ENCODE measurements at regions of chr16 and their contacts with region 1.

Region 1: DNA sequence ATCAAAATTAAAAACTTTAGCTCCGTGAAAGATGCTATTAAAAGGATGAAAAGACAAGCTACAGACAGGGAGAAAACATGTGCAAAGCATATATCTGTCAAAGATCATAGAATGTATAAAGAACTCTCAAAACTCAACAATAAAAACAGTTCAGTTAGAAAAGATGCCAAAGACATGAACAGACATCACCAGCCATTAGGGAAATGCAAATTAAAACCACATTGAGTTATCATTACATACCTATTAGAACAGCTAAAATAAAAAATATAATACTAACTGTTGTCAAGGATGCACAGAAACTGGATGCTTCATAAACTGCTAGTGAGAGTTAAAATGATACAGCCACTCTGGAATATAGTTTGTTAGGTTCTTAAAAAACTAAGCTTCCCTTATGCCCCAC is 58.8 kb downstream of the NFATC3 start:
- DNase-seq: no peak
- H3K4me3 Mint-ChIP-seq: no peak overlapping the region
- H3K27ac Mint-ChIP-seq: no peak overlapping the region
- H3K4me1 Mint-ChIP-seq: peaks cover 54% of the 10 kb centered on the region
- H3K27me3 Mint-ChIP-seq: no peaks in the 10 kb centered on the region

Region 2: DNA sequence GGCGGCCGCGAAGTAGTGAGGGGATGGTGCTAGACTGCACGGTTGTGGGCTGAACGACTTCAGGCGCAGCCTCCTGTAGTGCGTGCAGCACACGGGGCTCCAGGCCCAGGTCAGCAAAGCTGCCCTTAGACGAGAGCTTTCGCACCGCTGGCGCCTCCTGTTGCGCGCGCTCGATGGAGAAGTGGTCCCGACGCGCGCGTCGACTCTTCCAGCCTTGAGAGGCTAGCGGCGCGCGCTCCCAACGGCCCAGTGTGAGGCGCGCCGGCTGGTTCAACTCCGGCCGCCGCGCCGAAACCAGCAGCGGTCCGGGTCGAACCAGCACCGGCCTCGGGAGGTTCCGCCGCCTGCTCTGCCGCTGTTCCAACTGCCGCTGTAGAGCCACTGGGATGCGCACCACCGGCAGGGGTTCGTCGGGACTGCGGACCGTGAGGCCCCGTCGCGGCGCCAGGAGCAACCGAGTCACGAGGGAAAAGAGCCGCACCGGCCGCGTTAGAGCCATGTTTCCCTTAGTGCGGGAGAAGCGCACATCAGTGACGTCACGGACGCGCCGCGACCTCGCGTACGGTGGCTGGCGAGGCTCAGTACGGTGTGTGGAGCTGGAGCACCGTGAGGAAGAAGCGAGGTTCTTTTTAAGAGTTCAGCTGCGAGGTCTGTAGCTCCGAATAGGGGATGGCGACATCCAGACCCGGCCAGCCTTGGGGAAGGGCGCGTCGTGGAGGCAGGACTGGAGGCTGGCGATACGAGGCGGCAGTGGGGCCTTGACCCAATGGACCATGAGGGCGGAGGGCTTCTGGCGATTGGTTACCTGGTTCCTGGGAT is 121.1 kb before region 1 on chr16 and contains the starts of genes DDX28 and DUS2:
- CTCF ChIA-PET with region 1: no interaction called
- POLR2A ChIA-PET with region 1: no interaction called
- intact Hi-C with region 1: no loop called
- DNase-seq: peak; percentile 97
- H3K4me3 Mint-ChIP-seq: peak within 1 kb of the TSS; percentile 95
- H3K27ac Mint-ChIP-seq: peak within 1 kb of the TSS; percentile 94
- H3K4me1 Mint-ChIP-seq: peaks cover 26% of the 10 kb centered on the region
- H3K27me3 Mint-ChIP-seq: no peaks in the 10 kb centered on the region
- total RNA-seq, gene DDX28: 12.8 to 14.5 TPM
- total RNA-seq, gene DUS2: 29.2 to 29.4 TPM

Region 3: DNA sequence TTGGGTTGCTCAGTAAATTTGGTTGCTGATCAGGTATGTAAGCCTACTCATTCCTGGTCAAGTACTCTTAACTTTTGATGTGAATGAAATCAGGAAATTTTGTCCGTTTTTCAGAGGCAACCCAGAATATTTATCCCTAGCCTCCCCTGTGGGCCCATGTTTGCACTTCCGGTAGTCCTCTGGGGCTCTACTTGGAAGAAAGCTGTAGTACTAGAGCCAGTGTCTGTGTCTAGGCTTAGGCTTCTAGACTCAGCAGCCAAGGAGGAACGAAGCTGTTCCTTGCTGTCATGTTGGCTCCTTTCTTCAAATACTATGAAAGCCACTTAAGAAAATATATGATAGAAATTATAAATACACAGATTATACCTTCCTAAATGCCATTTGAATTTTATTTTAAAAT is 70.7 kb after region 1 on chr16:
- CTCF ChIA-PET with region 1: no interaction called
- POLR2A ChIA-PET with region 1: no interaction called
- intact Hi-C with region 1: loop called (anchors 5 kb)
- DNase-seq: no peak
- H3K4me3 Mint-ChIP-seq: no peak overlapping the region
- H3K27ac Mint-ChIP-seq: no peak overlapping the region
- H3K4me1 Mint-ChIP-seq: peaks cover 28% of the 10 kb centered on the region
- H3K27me3 Mint-ChIP-seq: no peaks in the 10 kb centered on the region

Measured in activated CD4-positive, alpha-beta memory T cell treated with anti-CD3 and anti-CD28 coated beads for 36 hours (primary cell).